ENCODE measurements at regions of chr12 and their contacts with region 1.

Region 1: DNA sequence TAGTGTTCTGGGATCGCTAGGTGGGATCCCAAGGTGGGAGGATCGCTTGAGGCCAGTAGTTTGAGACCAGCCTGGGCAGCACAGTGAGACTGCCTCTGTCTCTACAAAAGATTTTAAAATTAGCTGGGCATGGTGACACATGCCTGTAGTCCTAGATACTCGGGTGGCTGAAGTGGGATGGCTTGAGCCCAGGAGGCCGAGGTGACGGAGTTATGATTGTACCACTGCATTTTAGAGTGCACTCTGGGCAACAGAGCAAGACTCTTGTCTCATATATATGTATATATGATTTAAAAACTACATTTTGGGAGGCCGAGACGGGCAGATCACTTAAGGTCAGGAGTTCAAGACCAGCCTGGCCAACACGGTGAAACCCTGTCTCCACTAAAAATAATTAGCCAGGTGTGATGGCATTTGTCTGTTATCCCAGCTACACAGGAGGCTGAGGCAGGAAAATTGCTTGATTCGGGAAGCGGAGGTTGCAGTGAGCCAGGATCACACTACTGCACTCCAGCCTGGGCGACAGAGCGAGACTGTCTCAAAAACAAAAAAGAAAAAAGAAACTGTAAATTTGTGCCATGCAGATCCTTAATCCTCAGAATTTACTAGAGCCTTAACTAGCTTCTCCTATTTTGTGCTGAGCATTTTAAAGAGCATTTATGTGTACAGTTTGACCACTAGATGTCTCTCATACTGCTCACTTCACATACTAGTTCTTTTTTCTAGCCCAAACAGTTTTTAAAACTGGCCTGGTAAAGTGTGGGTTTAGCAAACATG is 114.8 kb downstream of the MON2 start:
- DNase-seq: no peak
- ATAC-seq: peak; percentile 87
- H3K4me3 ChIP-seq: no peak overlapping the region
- H3K27ac ChIP-seq: no peak overlapping the region
- H3K4me1 ChIP-seq: no peaks in the 10 kb centered on the region
- H3K27me3 ChIP-seq: no peaks in the 10 kb centered on the region
- CTCF ChIP-seq: peak; percentile 49 to 66 (median 65); a peak in 4 of 6 replicates
- EP300 ChIP-seq: no peak
- POLR2A ChIP-seq: no peak
- RAD21 ChIP-seq: peak; percentile 81

Region 2: GRCh38 chr12:62562846-62563245 is 18.6 kb before region 1 on chr12:
- CTCF ChIA-PET with region 1: interaction called, 11 read pairs
- POLR2A ChIA-PET with region 1: no interaction called
- RAD21 ChIA-PET with region 1: interaction called, 3 read pairs
- SMC1A ChIA-PET with region 1: interaction called, 7 read pairs
- in situ Hi-C with region 1: no loop called
- intact Hi-C with region 1: no loop called
- DNase-seq: no peak
- ATAC-seq: no peak
- H3K4me3 ChIP-seq: no peak overlapping the region
- H3K27ac ChIP-seq: no peak overlapping the region
- H3K4me1 ChIP-seq: no peaks in the 10 kb centered on the region
- H3K27me3 ChIP-seq: no peaks in the 10 kb centered on the region
- CTCF ChIP-seq: no peak
- EP300 ChIP-seq: no peak
- POLR2A ChIP-seq: no peak
- RAD21 ChIP-seq: no peak

Measured in GM12878 (cell line).